ENCODE measurements at regions of chr11 and their contacts with region 1.

Region 1: DNA sequence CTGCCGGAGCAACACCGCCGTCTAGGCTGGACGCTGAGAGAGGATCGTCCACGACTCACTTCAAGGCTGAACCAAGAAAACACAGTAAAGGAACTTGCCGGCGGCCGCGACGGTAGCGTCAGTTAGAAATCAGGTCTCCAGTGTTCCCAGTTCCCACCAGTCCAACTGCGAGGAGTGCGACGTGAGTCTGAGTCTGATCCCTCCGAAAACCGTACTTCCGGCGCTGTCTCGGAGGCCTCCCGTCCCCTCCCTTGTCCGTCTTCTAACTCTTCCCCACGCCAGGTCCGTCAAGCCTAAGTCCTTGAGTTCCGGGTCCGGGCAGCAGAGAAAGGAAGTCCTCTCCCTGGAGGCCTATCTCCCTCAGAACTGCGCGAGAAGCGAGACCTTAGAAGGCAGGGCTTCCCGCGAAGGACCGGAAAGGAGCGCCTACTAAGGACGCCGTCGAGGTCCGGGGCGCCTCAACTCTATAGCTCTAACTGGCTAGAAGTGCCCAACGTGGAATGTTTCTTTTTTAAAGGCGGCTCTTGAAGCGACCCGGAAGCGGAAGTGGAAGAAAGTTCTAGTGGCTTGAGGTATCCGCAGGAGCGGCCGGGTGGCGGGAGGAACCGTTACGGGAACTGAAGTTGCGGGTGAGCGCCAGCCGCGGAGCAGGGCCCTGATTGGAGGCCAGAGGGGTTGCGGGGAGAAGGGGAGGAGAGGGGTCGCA is at the starts of genes BANF1 and EIF1AD:
- DNase-seq: peak; percentile 88 to 98 (median 92)

Region 2: GRCh38 chr11:65961232-65961901 is 40.7 kb before region 1 on chr11 and contains the start of gene SART1:
- intact Hi-C with region 1: loop called (anchors 1 kb)
- DNase-seq: peak; percentile 96 to 99 (median 97)

Region 3: DNA sequence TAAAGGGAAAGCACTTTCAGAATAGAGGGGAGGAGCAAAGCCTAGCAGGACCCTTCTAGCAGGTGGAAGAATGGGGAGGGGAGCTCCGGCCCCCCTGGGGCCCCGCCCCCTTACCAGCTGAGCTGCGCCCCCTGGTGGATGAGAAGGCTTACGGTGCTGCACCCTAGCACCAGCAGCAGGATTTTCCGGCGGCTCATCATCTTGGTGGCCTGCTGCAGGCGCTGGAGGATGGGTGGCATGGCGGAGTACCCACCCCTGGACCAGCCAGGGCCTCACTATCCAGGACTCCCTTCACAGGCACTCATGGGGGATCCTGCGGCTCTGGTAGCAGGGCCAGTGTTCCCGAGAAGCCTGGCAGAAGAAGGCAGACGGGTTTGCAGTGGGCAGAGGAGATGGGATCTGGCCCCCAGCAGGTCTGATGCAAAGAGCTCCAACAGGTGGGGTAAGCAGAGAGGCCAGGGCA is 43.1 kb after region 1 on chr11:
- intact Hi-C with region 1: loop called (anchors 5 kb)
- DNase-seq: peak; percentile 70 to 97 (median 82)

Measured in posterior cingulate gyrus (tissue), 11 donors.